Activated naive CD4-positive, alpha-beta T cell treated with anti-CD3 and anti-CD28 coated beads for 36 hours (primary cell): ENCODE measurements at regions of chr1 and their contacts with region 1.

Region 1: DNA sequence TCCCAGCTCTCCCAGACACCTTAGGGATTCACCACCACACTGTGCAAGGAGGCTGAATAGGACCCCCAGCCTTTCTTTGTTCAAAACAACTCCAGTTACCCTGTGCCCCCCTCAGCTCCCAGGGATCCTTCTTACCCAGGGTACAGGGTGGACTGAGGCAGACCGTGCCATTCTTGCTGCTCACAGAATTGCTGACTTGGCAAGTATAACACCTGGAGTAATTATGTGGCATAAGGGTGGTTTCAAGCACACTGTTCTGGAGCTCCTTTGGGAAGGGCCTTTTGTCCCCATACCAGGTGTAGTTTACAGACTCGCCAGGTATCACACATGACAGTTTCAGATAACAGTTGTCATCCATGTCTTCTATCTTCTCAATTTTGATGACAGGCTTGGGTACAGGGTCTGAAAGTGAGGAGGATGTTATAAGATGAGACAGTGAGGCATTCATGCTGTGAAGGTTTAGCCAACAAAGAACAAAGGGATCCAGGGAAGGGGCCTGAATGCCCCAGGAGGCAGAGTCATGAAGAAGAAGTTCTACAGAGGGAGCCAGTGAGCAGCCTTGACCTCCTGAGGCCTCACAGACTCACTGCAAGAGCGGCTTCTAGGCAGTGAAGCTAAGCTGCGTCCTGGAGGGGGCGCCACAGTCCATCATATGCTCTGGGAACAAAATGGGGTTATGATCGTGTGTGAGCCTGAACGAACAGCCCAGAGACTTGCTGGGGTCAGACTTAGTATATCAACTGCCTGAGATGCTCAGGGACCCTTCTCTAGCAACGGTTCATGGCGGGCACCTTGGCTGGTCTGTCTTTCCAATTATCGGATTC is 30.3 kb downstream of the CD48 start:
- DNase-seq: peak; percentile 96
- H3K4me3 Mint-ChIP-seq: no peak overlapping the region
- H3K27ac Mint-ChIP-seq: peak overlapping the region; percentile 95
- H3K4me1 Mint-ChIP-seq: peaks cover 77% of the 10 kb centered on the region
- H3K27me3 Mint-ChIP-seq: no peaks in the 10 kb centered on the region

Region 2: GRCh38 chr1:159924981-159925712 is 756.1 kb before region 1 on chr1 and contains the start of gene TAGLN2:
- CTCF ChIA-PET with region 1: no interaction called
- intact Hi-C with region 1: loop called (anchors 10 kb)
- DNase-seq: peak; percentile 89
- H3K4me3 Mint-ChIP-seq: peak within 1 kb of the TSS; percentile 91
- H3K27ac Mint-ChIP-seq: peak within 1 kb of the TSS; percentile 93
- H3K4me1 Mint-ChIP-seq: peaks cover 42% of the 10 kb centered on the region
- H3K27me3 Mint-ChIP-seq: no peaks in the 10 kb centered on the region
- total RNA-seq, gene TAGLN2: 453 to 454 TPM

Region 3: GRCh38 chr1:160702100-160702499 is 20.8 kb after region 1 on chr1:
- CTCF ChIA-PET with region 1: interaction called, 34 read pairs
- intact Hi-C with region 1: no loop called
- DNase-seq: no peak
- H3K4me3 Mint-ChIP-seq: no peak overlapping the region
- H3K27ac Mint-ChIP-seq: peak overlapping the region; percentile 54
- H3K4me1 Mint-ChIP-seq: peaks cover 87% of the 10 kb centered on the region
- H3K27me3 Mint-ChIP-seq: no peaks in the 10 kb centered on the region

Region 4: GRCh38 chr1:160726498-160727315 is 45.4 kb after region 1 on chr1:
- CTCF ChIA-PET with region 1: interaction called, 84 read pairs
- intact Hi-C with region 1: loop called (anchors 1 kb)
- DNase-seq: peak; percentile 81
- H3K4me3 Mint-ChIP-seq: no peak overlapping the region
- H3K27ac Mint-ChIP-seq: no peak overlapping the region
- H3K4me1 Mint-ChIP-seq: peaks cover 34% of the 10 kb centered on the region
- H3K27me3 Mint-ChIP-seq: no peaks in the 10 kb centered on the region

Region 5: DNA sequence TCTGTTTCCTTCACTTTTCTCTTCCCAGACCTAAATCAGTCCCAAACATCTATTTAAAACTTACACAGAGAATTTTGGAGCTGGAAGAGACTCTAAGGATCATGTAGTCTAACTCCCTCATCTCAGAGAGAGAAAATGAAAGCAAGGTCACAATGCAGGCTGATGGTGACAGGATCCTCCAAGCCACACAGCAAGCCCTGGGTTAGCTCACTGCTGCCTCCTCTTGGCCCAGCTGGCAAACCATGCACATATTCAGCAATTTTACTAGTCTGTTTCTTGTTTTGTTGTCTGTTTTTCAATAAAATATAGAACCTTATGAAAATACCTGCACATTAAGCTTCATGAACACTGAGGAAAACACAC is 87.0 kb after region 1 on chr1:
- CTCF ChIA-PET with region 1: interaction called, 77 read pairs
- intact Hi-C with region 1: loop called (anchors 1 kb)
- DNase-seq: peak; percentile 96
- H3K4me3 Mint-ChIP-seq: peak overlapping the region; percentile 79
- H3K27ac Mint-ChIP-seq: peak overlapping the region; percentile 99
- H3K4me1 Mint-ChIP-seq: peaks cover 68% of the 10 kb centered on the region
- H3K27me3 Mint-ChIP-seq: no peaks in the 10 kb centered on the region

Region 6: DNA sequence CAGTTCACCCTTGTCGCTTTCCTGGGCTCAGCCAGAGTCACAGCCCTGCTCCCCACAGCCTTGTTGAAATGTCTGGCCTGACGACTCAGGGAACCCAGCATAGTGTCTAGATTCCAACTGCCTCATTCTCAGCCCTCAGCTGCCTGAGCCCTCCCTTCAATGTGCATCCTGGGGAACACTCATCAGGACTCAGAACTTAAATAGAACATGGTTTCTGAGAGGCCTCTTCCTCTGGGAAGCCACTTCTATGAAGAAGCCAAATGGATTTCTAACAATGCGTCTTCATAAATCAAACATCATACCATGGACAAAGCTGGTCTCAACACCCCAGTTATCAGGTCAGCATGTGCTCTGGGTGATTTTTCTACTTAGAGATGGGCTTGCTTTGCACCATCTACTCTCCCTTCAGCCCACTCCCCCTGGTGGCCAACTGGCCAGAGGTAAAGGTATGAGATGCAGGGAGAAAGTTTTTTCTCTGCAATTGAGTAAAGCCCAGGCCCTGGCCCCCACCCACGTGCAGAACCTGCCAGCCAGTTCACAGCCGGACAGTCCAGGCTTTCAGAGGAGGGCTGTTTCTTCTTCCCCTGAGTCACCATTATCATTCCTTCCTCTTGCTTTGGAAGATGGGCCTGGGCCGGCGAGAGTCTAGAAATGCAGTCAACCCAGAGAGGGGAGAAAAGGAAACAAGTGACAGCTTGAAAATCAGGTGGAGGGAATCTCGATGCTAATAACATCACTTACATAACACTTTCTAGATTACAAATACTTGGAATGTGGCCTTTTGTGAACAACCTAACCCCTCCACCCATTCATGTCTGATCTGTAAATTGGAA is 149.3 kb after region 1 on chr1:
- CTCF ChIA-PET with region 1: interaction called, 19 read pairs
- intact Hi-C with region 1: loop called (anchors 1 kb)
- DNase-seq: peak; percentile 91
- H3K4me3 Mint-ChIP-seq: no peak overlapping the region
- H3K27ac Mint-ChIP-seq: peak overlapping the region; percentile 32
- H3K4me1 Mint-ChIP-seq: peaks cover 18% of the 10 kb centered on the region
- H3K27me3 Mint-ChIP-seq: no peaks in the 10 kb centered on the region

Region 7: GRCh38 chr1:160877221-160877620 is 195.9 kb after region 1 on chr1:
- CTCF ChIA-PET with region 1: no interaction called
- intact Hi-C with region 1: loop called (anchors 5 kb)
- DNase-seq: peak; percentile 14
- H3K4me3 Mint-ChIP-seq: no peak overlapping the region
- H3K27ac Mint-ChIP-seq: no peak overlapping the region
- H3K4me1 Mint-ChIP-seq: peaks cover 16% of the 10 kb centered on the region
- H3K27me3 Mint-ChIP-seq: no peaks in the 10 kb centered on the region

Region 8: DNA sequence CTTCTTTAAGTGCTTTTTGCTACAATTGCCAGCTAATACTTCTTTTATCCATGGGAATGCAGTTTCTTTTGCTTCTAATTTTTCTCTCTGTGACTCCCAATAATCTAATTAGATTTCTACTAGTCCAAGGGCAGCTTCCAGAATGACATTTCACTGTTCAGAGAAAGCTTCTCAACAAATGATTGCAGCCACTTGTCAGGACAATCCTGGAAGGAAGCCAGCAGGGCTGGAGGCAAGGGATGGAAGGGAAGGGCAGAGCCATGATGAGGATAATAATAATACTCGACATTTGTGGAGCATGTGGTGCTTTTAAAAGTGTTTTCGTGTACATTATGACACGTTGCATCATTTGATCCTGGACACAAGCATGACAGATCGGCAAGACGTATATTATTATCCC is 320.2 kb after region 1 on chr1:
- CTCF ChIA-PET with region 1: no interaction called
- intact Hi-C with region 1: no loop called
- DNase-seq: no peak
- H3K4me3 Mint-ChIP-seq: no peak overlapping the region
- H3K27ac Mint-ChIP-seq: no peak overlapping the region
- H3K4me1 Mint-ChIP-seq: peaks cover 4% of the 10 kb centered on the region
- H3K27me3 Mint-ChIP-seq: no peaks in the 10 kb centered on the region